ENCODE measurements at regions of chr13 and their contacts with region 1.

Region 1: DNA sequence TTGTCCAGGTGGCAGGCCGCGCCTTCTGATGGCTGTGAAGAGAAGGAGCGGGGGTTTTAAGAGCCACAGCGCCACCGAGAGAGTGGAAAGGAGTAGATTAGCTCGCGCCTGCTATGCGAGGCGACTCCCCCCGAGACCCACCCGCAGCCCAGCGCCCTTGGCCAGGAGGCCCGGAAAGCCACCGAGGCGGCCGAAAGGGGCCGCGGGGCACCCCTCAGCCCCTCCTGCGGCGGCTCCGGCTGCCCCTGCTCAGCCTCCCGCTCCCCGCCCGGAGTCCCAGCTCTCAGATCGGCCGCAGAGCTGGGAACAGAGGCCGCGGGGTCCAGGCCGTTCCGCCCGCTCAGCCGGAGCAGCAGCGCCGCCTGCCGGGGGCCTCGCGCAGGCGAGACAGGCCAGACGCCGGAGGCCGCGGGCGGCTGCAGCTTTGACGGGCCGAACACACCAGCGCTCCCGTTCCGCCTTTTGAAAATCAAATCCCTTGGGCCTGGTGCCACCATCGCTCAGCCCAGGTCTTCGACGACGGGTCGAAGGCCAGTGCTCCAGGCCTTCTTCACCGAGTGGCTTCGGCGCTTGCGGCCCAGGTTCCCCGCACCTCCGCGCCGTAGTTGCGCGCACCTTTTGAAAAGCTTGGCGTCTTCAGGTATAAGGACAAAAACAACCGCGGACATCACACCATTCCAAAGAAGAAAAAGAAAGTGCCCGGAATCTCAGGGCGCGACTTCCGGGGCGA is 15.3 kb downstream of the CDX2 start:
- DNase-seq: peak; percentile 54
- ATAC-seq: peak; percentile 99
- H3K4me3 ChIP-seq: peak overlapping the region; percentile 41 to 58
- H3K27ac ChIP-seq: peak overlapping the region; percentile 56
- H3K4me1 ChIP-seq: peaks cover 9 to 15% of the 10 kb centered on the region in 2 experiments; a peak in 3 of 4 replicates
- H3K27me3 ChIP-seq: no peaks in the 10 kb centered on the region
- CTCF ChIP-seq: peak; percentile 75 to 95 (median 90)
- POLR2A ChIP-seq: no peak
- RAD21 ChIP-seq: peak; percentile 80

Region 2: DNA sequence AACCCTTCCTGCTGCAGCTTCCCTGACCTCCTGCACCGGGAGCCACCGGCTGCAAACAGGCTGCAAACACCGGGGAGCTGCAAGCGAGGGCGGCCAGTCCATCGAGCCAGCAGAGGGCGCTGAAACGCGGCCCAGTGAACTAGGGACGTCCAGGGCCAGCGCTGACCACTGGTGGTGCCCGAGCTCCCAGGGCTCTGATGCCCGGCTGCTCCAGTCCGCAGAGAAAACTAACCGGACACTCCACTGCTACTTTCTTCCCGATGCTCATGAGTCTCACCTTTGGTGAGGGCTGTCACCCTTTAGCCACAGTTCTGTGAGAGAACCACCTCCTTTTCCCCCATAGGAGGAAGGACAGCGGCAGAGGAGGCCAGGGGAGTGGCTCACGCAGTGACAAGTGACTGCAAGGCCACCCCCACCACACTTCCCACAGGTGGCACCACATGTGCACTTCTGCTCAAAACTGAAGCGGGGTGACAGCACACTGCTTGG is 420.6 kb before region 1 on chr13:
- CTCF ChIA-PET with region 1: interaction called, 14 read pairs
- POLR2A ChIA-PET with region 1: interaction called, 3 read pairs
- RAD21 ChIA-PET with region 1: no interaction called
- intact Hi-C with region 1: loop called (anchors 5 kb)
- DNase-seq: peak; percentile 62
- ATAC-seq: peak; percentile 98
- H3K4me3 ChIP-seq: peak overlapping the region; percentile 27 to 31; a peak in 3 of 4 replicates
- H3K27ac ChIP-seq: no peak overlapping the region
- H3K4me1 ChIP-seq: peaks cover 0 to 7% of the 10 kb centered on the region in 2 experiments; a peak in 1 of 4 replicates
- H3K27me3 ChIP-seq: no peaks in the 10 kb centered on the region
- CTCF ChIP-seq: peak; percentile 96 to 97 (median 97)
- POLR2A ChIP-seq: no peak
- RAD21 ChIP-seq: peak; percentile 75

Region 3: GRCh38 chr13:27834095-27834494 is 119.7 kb before region 1 on chr13:
- CTCF ChIA-PET with region 1: interaction called, 307 read pairs
- POLR2A ChIA-PET with region 1: interaction called, 15 read pairs
- RAD21 ChIA-PET with region 1: interaction called, 21 to 31 read pairs
- intact Hi-C with region 1: loop called (anchors 1 kb)
- DNase-seq: no peak
- ATAC-seq: no peak
- H3K4me3 ChIP-seq: no peak overlapping the region
- H3K27ac ChIP-seq: no peak overlapping the region
- H3K4me1 ChIP-seq: peaks cover 2 to 7% of the 10 kb centered on the region in 2 experiments; a peak in 2 of 4 replicates
- H3K27me3 ChIP-seq: no peaks in the 10 kb centered on the region
- CTCF ChIP-seq: no peak
- POLR2A ChIP-seq: no peak
- RAD21 ChIP-seq: no peak

Region 4: DNA sequence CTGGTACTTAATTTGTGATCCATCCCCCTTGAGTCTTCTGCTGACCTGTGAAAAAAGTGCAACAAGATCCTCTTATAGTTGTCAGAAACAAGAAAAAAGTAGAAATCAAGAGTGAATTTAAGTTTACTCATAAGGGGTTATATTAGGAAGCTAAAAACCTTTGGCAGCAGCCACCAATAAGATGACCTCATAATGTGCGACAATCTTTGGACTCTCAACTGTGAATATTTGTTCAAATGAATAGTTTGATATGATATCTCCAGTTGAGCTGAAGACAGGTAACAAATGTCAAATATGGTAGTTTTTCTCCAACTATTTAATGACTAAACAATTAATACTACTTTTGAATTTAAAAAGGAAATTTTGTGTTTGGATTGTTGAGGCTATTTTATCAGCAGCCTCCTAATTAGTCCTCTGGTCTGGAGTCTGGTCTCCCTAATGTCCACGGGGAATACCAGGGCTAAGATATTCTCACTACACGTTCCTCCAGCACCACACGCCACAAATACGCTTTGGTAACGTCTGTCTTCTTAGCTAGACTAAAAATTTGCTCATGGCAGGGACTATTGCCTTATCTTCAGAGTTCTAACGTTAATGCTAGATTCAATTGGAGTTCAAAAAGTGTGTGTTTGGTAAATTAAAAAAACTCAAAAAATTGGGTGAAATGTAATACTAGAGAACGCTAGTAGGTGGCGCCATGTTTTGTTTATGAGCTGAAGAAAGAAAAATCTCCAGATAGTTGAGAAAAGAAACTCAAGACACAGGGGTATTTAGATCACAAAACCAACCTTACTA is 85.0 kb before region 1 on chr13:
- CTCF ChIA-PET with region 1: interaction called, 34 read pairs
- POLR2A ChIA-PET with region 1: no interaction called
- RAD21 ChIA-PET with region 1: interaction called, 3 to 8 read pairs
- intact Hi-C with region 1: no loop called
- DNase-seq: peak; percentile 7
- ATAC-seq: peak; percentile 53; the same call in 1 of the 2 replicates
- H3K4me3 ChIP-seq: peak overlapping the region in 1 of 2 experiments; percentile 5; a peak in 1 of 4 replicates
- H3K27ac ChIP-seq: no peak overlapping the region
- H3K4me1 ChIP-seq: peaks cover 0 to 6% of the 10 kb centered on the region in 2 experiments; a peak in 1 of 4 replicates
- H3K27me3 ChIP-seq: no peaks in the 10 kb centered on the region
- CTCF ChIP-seq: peak; percentile 34 to 68 (median 52); a peak in 5 of 6 replicates
- POLR2A ChIP-seq: no peak
- RAD21 ChIP-seq: peak; percentile 29

Region 5: DNA sequence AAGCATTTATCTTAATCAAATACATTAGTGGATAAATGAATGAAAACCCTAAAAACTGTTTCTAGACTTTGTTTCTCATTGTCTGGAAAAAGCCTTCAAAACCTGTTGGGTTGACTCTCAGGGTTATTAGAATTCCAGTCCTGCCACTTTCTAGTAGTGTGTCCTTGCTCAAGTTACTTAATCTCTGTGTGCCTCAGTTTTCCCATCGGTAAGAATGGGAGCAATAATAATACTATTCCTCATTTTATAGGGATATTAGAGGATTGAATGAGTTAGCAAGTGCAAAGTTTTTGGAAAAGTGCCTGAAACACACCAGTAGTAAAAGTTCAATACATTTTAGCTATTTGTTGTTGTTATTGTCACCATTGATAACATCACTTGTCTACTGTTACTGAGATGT is 31.8 kb after region 1 on chr13:
- CTCF ChIA-PET with region 1: interaction called, 16 read pairs
- POLR2A ChIA-PET with region 1: no interaction called
- RAD21 ChIA-PET with region 1: no interaction called
- intact Hi-C with region 1: no loop called
- DNase-seq: no peak
- ATAC-seq: no peak
- H3K4me3 ChIP-seq: no peak overlapping the region
- H3K27ac ChIP-seq: no peak overlapping the region
- H3K4me1 ChIP-seq: no peaks in the 10 kb centered on the region
- H3K27me3 ChIP-seq: no peaks in the 10 kb centered on the region
- CTCF ChIP-seq: no peak
- POLR2A ChIP-seq: no peak
- RAD21 ChIP-seq: no peak

Region 6: DNA sequence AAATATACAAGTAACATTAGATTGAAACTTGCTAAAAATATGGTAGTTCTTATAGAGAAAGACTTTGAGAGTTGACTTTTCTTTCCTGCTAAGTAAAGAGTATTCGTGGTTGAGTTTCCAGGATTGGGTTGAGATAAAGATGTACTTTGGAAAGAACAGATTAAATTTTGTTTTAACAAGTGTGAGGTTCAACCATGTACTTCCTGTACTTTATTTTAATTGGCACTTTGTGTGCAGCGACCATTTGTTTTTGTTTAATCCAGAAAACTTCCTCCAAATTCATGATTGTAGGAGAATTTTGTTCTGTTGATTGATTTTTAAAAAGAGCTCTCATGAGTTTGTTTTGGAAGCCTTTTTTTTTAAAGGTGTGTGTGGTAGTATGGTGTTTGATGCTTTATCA is 231.4 kb after region 1 on chr13:
- CTCF ChIA-PET with region 1: no interaction called
- POLR2A ChIA-PET with region 1: no interaction called
- RAD21 ChIA-PET with region 1: no interaction called
- intact Hi-C with region 1: no loop called
- DNase-seq: no peak
- ATAC-seq: no peak
- H3K4me3 ChIP-seq: no peak overlapping the region
- H3K27ac ChIP-seq: no peak overlapping the region
- H3K4me1 ChIP-seq: peaks cover 0 to 3% of the 10 kb centered on the region in 2 experiments; a peak in 1 of 4 replicates
- H3K27me3 ChIP-seq: no peaks in the 10 kb centered on the region
- CTCF ChIP-seq: no peak
- POLR2A ChIP-seq: no peak
- RAD21 ChIP-seq: no peak

Region 7: DNA sequence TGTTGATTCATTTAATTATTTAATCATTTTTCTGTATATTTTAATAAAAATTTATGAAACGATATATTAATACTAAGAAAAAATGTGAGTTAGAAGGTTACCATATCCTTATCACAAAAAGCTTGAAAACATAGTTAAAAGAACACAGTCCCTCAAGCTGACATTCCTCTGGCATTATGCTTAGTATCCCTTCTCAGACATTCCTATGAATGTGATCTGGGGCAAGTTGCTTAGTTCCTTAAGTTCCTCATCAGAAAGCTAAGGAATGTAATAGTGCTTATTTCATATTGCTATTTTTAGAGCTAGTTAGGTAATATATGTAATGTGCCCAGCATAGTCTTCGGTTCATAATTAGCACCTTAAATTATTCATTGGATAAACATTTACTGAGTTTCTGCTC is 989.1 kb after region 1 on chr13:
- CTCF ChIA-PET with region 1: no interaction called
- POLR2A ChIA-PET with region 1: no interaction called
- RAD21 ChIA-PET with region 1: no interaction called
- intact Hi-C with region 1: no loop called
- DNase-seq: no peak
- ATAC-seq: no peak
- H3K4me3 ChIP-seq: no peak overlapping the region
- H3K27ac ChIP-seq: no peak overlapping the region
- H3K4me1 ChIP-seq: no peaks in the 10 kb centered on the region
- H3K27me3 ChIP-seq: peaks cover 21% of the 10 kb centered on the region
- CTCF ChIP-seq: no peak
- POLR2A ChIP-seq: no peak
- RAD21 ChIP-seq: no peak